ENCODE measurements at regions of chr7 and their contacts with region 1.

Region 1: DNA sequence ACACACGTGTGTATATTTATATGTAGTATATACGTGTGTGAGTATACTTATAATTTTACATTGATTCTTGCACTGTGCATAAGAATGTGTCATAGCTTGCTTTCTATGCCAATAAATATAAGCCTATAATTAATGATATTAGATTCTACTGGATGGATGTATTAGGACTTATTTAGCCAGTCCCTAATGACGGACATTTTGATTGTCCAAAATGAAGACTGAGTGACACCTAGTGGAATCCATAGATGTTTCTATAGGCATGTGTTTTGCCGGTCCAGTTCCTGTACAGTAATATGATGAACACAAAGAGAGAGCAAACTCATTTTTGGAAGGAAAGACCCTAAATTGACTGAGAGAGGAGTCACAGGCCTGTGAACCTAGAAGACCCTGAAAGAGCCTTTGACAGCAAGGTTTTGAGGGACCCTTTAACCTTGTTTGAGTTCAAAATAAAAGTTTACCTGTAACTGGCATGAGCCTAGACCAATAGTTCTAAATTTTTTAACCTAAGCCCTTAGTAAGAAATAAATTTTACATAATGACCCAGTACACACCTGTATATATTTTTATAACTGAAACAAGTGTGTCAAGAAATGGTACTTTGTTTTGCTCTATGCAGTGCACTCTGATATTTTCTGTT is 42.4 kb upstream of the AGBL3 start:
- DNase-seq: peak in 1 of 2 experiments; percentile 53
- H3K4me3 ChIP-seq: no peak overlapping the region
- H3K4me3 Mint-ChIP-seq: no peak overlapping the region
- H3K27ac Mint-ChIP-seq: no peak overlapping the region
- H3K4me1 ChIP-seq: peaks cover 62% of the 10 kb centered on the region
- H3K4me1 Mint-ChIP-seq: peaks cover 69% of the 10 kb centered on the region
- H3K27me3 ChIP-seq: no peaks in the 10 kb centered on the region
- H3K27me3 Mint-ChIP-seq: no peaks in the 10 kb centered on the region
- CTCF ChIP-seq: peak; percentile 59 to 64

Region 2: DNA sequence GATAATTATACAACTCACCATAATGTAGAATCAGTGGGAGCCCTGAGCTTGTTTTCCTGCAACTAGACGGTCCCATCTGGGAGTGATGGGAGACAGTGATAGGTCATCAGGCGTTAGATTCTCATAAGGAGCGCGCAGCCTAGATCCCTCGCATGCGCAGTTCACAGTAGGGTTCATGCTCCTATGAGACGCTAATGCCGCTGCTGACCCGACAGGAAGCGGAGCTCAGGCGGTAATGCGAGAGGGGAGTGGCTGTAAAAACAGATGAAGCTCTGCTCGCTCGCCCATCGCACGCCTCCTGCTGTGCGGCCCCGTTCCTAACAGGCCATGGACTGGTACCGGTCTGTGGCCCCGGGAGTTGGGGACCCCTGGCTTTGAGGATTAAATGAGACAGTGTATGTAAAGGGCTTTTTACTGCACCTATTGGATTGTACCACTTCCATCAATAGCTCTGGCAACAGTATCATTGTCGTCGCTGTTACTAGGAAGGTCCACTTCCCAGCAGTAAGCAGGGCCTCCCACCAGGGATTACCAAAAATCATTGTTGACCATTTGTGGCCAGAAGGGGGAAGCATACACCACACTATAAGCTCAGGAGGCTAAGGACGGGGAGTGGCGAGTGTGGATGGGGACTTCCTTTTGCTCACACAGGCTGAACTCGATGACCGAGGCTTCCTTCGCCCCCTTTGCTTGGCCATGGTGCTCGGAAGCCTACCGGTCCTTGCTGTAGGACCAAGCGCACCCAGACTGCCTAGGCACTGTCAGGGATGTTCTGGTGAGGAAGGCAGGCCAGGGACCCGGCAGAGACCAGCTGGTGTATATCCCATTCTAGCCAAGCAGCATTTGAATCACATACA is 511.4 kb before region 1 on chr7:
- CTCF ChIA-PET with region 1: no interaction called
- POLR2A ChIA-PET with region 1: no interaction called
- intact Hi-C with region 1: loop called (anchors 10 kb)
- DNase-seq: peak; percentile 88 to 94
- H3K4me3 ChIP-seq: peak overlapping the region; percentile 39
- H3K4me3 Mint-ChIP-seq: peak overlapping the region; percentile 84
- H3K27ac Mint-ChIP-seq: peak overlapping the region; percentile 72
- H3K4me1 ChIP-seq: peaks cover 19% of the 10 kb centered on the region
- H3K4me1 Mint-ChIP-seq: peaks cover 17% of the 10 kb centered on the region
- H3K27me3 ChIP-seq: no peaks in the 10 kb centered on the region
- H3K27me3 Mint-ChIP-seq: peaks cover 4% of the 10 kb centered on the region
- CTCF ChIP-seq: peak; percentile 69 to 85

Region 3: GRCh38 chr7:134690016-134690415 is 253.9 kb before region 1 on chr7:
- CTCF ChIA-PET with region 1: interaction called, 15 read pairs
- POLR2A ChIA-PET with region 1: interaction called, 5 read pairs
- intact Hi-C with region 1: loop called (anchors 1 kb)
- DNase-seq: peak in 1 of 2 experiments; percentile 42
- H3K4me3 ChIP-seq: no peak overlapping the region
- H3K4me3 Mint-ChIP-seq: no peak overlapping the region
- H3K27ac Mint-ChIP-seq: no peak overlapping the region
- H3K4me1 ChIP-seq: peaks cover 12% of the 10 kb centered on the region
- H3K4me1 Mint-ChIP-seq: peaks cover 30% of the 10 kb centered on the region
- H3K27me3 ChIP-seq: no peaks in the 10 kb centered on the region
- H3K27me3 Mint-ChIP-seq: no peaks in the 10 kb centered on the region
- CTCF ChIP-seq: peak; percentile 35 to 64

Region 4: DNA sequence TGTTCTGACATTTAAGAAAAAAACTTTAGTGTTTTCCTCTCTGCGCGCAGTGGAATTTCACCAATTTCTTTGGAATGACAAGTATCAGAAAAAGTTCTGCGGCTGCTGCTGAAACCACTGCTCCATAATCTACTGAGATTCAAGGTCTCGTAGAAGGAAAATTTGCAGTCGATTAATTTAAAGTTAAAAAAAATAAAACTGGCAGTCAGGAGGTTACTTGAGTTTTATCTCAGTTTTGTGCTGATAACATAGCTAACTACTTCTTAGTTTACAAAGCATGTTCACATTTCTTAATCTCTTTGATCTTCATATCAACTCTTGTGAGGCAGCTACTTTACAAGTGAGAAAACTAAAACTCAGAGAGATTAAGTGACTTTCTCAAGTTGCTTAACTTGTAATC is 182.6 kb before region 1 on chr7:
- CTCF ChIA-PET with region 1: no interaction called
- POLR2A ChIA-PET with region 1: no interaction called
- intact Hi-C with region 1: loop called (anchors 5 kb)
- DNase-seq: no peak
- H3K4me3 ChIP-seq: no peak overlapping the region
- H3K4me3 Mint-ChIP-seq: peak overlapping the region; percentile 14
- H3K27ac Mint-ChIP-seq: peak overlapping the region; percentile 27
- H3K4me1 ChIP-seq: peaks cover 34% of the 10 kb centered on the region
- H3K4me1 Mint-ChIP-seq: peaks cover 44% of the 10 kb centered on the region
- H3K27me3 ChIP-seq: no peaks in the 10 kb centered on the region
- H3K27me3 Mint-ChIP-seq: no peaks in the 10 kb centered on the region
- CTCF ChIP-seq: no peak

Region 5: DNA sequence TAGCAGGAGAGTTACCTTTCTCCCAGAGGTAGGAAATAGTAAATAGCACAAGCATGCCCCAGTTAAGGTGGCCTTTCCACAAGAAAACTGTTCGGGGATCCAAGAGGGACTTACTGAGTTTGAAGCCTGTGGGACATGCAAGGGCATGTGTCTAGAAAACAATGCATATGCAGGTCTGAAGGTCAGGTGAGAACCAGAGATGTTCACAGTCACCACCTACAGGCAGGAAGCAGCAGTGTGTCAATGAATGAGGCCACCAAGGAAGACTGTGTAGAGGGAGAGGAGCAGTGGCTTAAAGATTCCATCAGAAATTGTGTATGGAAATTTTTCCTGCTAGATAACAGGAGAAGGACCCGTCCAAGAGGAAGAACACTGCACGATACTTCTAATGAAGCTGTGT is 98.4 kb before region 1 on chr7:
- CTCF ChIA-PET with region 1: no interaction called
- POLR2A ChIA-PET with region 1: no interaction called
- intact Hi-C with region 1: loop called (anchors 1 kb)
- DNase-seq: peak; percentile 48 to 53
- H3K4me3 ChIP-seq: no peak overlapping the region
- H3K4me3 Mint-ChIP-seq: no peak overlapping the region
- H3K27ac Mint-ChIP-seq: no peak overlapping the region
- H3K4me1 ChIP-seq: peaks cover 22% of the 10 kb centered on the region
- H3K4me1 Mint-ChIP-seq: peaks cover 33% of the 10 kb centered on the region
- H3K27me3 ChIP-seq: no peaks in the 10 kb centered on the region
- H3K27me3 Mint-ChIP-seq: no peaks in the 10 kb centered on the region
- CTCF ChIP-seq: peak; percentile 42 to 66

Region 6: GRCh38 chr7:134891262-134891695 is 52.6 kb before region 1 on chr7:
- CTCF ChIA-PET with region 1: no interaction called
- POLR2A ChIA-PET with region 1: no interaction called
- intact Hi-C with region 1: loop called (anchors 2 kb)
- DNase-seq: peak; percentile 94 to 96
- H3K4me3 ChIP-seq: peak overlapping the region; percentile 51
- H3K4me3 Mint-ChIP-seq: peak overlapping the region; percentile 71
- H3K27ac Mint-ChIP-seq: peak overlapping the region; percentile 46
- H3K4me1 ChIP-seq: peaks cover 54% of the 10 kb centered on the region
- H3K4me1 Mint-ChIP-seq: peaks cover 44% of the 10 kb centered on the region
- H3K27me3 ChIP-seq: no peaks in the 10 kb centered on the region
- H3K27me3 Mint-ChIP-seq: no peaks in the 10 kb centered on the region
- CTCF ChIP-seq: no peak

Region 7: GRCh38 chr7:134922720-134923704 is 20.9 kb before region 1 on chr7:
- CTCF ChIA-PET with region 1: no interaction called
- POLR2A ChIA-PET with region 1: no interaction called
- intact Hi-C with region 1: loop called (anchors 2 kb)
- DNase-seq: no peak
- H3K4me3 ChIP-seq: no peak overlapping the region
- H3K4me3 Mint-ChIP-seq: no peak overlapping the region
- H3K27ac Mint-ChIP-seq: no peak overlapping the region
- H3K4me1 ChIP-seq: peaks cover 18% of the 10 kb centered on the region
- H3K4me1 Mint-ChIP-seq: peaks cover 14% of the 10 kb centered on the region
- H3K27me3 ChIP-seq: no peaks in the 10 kb centered on the region
- H3K27me3 Mint-ChIP-seq: no peaks in the 10 kb centered on the region
- CTCF ChIP-seq: no peak

Region 8: DNA sequence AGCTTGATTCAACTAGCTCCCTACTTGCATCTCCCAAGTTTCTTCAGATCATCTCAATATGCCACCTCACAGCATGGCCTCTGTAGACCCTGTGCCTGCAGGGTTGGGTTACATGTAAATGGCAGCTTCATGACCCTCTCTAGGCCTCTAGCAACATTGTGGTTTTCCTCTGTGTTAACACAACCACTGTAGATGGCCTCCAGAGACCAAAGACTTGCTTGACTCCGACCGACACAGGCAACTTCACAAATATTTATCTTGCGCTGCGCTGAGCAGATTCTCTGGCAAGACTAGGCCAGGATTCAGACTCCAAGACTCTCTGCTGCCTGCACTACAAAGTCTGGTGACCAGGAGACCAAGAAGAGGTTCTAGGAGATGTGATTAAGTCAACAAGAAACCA is 490.2 kb after region 1 on chr7:
- CTCF ChIA-PET with region 1: no interaction called
- POLR2A ChIA-PET with region 1: no interaction called
- intact Hi-C with region 1: no loop called
- DNase-seq: no peak
- H3K4me3 ChIP-seq: no peak overlapping the region
- H3K4me3 Mint-ChIP-seq: no peak overlapping the region
- H3K27ac Mint-ChIP-seq: no peak overlapping the region
- H3K4me1 ChIP-seq: no peaks in the 10 kb centered on the region
- H3K4me1 Mint-ChIP-seq: peaks cover 8% of the 10 kb centered on the region
- H3K27me3 ChIP-seq: no peaks in the 10 kb centered on the region
- H3K27me3 Mint-ChIP-seq: no peaks in the 10 kb centered on the region
- CTCF ChIP-seq: no peak

Measured in Caco-2 (cell line).